Calu3 (cell line): ENCODE measurements at regions of chr17 and their contacts with region 1.

Region 1: DNA sequence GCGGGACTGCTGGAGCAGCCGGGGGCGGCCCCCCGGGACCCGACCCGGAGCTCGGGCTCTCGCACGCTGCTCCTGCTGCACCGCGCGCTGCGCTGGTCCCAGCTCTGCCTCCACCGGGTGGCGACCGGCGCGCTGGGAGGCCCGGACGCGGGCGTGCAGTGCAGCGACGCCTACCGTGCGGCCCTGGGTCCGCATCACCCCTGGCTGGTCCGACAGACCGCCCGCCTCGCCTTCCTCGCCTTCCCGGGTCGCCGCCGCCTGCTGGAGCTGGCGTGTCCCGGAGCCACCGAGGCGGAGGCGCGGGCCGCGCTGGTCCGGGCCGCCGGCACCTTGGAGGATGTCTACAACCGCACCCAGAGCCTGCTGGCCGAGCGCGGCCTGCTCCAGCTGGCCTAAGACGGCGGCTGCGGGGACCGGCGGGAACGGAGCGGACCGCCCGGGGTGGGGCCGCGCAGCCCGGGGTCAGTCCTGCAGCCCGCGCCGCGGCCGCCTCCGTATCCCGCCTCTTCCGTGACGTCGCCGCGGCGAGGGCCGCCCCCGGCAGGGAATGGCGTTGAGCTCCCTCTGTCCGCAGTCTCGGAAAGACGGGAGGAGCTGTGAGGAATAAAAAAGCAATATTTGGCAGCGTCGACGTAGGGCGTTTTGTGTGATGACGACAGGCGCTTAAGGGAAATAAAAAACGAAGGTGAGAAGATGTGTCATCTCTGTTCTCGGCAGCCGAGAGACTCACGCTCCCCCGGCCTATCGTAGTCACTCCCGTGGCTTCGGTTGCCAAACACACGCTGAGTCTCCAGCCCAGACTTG is 1.3 kb downstream of the GLTPD2 start:
- DNase-seq: peak; percentile 90
- H3K4me3 Mint-ChIP-seq: peak overlapping the region; percentile 87
- H3K27ac Mint-ChIP-seq: peak overlapping the region; percentile 75
- H3K4me1 Mint-ChIP-seq: peaks cover 16% of the 10 kb centered on the region
- H3K27me3 Mint-ChIP-seq: no peaks in the 10 kb centered on the region
- CTCF ChIP-seq: peak; percentile 69

Region 2: DNA sequence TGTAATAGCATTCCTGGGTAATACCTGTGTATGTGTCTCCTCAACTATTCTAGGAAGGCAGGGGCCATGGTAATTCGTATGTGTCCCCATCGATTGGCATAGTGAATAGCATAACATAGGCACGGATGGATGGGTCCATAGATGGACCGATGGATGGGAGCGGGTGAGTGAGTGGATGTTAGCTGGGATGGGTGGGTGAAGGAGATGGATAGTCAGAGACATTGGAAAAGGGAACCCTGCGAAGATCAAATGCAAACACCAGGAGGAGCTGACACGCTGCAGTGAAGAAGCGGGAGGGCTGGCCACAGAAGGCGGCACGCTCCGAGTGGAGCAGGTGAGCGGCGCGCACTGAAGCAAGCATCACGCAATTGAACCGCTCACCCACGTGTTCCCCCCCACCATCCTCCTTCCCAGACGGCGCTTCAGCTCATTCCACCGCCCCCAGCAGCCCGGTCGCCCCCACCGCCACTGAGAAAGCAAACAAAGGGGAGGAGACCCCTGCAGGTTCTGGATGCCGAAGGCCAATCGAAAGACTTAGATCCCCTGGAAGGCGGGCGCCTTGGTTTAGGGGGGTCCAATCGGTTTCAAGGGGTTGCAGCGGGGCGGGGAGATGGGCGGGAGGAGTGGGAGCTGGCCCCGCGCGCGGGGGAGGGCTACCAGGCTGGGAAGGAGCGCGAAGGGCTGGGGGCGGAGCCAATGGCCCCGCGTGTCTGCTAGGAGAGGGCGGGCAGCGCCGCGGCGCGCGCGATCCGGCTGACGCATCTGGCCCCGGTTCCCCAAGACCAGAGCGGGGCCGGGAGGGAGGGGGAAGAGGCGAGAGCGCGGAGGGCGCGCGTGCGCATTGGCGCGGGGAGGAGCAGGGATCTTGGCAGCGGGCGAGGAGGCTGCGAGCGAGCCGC is 80.1 kb before region 1 on chr17 and contains the start of gene ARRB2:
- CTCF ChIA-PET with region 1: interaction called, 14 read pairs
- intact Hi-C with region 1: loop called (anchors 5 kb)
- DNase-seq: peak; percentile 92
- H3K4me3 Mint-ChIP-seq: peak within 1 kb of the TSS; percentile 74
- H3K27ac Mint-ChIP-seq: peak within 1 kb of the TSS; percentile 62
- H3K4me1 Mint-ChIP-seq: peaks cover 11% of the 10 kb centered on the region
- H3K27me3 Mint-ChIP-seq: no peaks in the 10 kb centered on the region
- CTCF ChIP-seq: peak; percentile 46
- total RNA-seq, gene ARRB2: 21.1 and 27.6 TPM in 2 replicates

Region 3: GRCh38 chr17:4739122-4740024 is 50.7 kb before region 1 on chr17 and contains the starts of genes CXCL16 and ZMYND15:
- CTCF ChIA-PET with region 1: interaction called, 11 read pairs
- intact Hi-C with region 1: no loop called
- DNase-seq: peak; percentile 65
- H3K4me3 Mint-ChIP-seq: peak within 1 kb of the TSS; percentile 77
- H3K27ac Mint-ChIP-seq: peak within 1 kb of the TSS; percentile 82
- H3K4me1 Mint-ChIP-seq: peaks cover 8% of the 10 kb centered on the region
- H3K27me3 Mint-ChIP-seq: no peaks in the 10 kb centered on the region
- CTCF ChIP-seq: no peak
- total RNA-seq, gene CXCL16: 73.1 and 77.6 TPM in 2 replicates
- total RNA-seq, gene ZMYND15: 2.2 and 2.5 TPM in 2 replicates

Region 4: DNA sequence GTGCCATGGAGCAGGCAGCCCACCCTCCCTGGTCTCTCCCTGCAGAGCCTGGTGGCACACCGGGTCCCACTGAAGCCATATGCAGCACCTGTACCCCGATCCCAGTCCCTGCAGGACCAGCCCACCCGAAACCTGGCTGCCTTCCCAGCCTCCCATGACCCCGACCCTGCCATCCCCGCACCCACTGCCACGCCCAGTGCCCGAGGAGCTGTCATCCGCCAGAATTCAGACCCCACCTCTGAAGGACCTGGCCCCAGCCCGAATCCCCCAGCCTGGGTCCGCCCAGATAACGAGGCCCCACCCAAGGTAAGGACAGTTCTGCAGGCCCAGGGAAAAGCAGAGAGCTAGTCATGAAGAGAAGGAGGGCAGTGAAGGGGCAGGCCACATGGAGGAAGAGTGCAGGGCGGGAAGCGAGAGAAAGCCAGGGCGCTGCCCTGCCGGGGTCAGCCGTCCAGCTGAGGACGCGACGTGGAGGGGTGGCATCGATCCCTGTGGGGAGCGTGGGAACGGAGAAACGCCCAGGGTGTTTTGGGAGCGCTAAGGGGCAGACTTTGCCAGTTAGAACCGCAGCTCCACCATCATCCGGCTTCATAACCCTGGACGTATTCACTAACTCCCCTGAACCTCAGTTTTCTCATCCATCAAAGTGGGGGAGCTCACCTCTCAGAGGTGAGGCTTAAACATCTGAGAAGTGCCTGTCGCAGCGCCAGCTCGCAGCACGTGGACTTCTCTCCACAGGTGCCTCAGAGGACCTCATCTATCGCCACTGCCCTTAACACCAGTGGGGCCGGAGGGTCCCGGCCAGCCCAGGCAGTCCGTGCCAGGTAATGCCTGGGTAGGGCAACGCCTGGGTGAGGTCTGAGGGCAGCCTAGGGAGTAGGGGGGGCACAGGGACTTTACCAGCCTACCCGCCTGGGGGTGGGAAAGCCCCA is 101.6 kb after region 1 on chr17:
- CTCF ChIA-PET with region 1: interaction called, 4 read pairs
- intact Hi-C with region 1: loop called (anchors 1 kb)
- DNase-seq: no peak
- H3K4me3 Mint-ChIP-seq: no peak overlapping the region
- H3K27ac Mint-ChIP-seq: no peak overlapping the region
- H3K4me1 Mint-ChIP-seq: no peaks in the 10 kb centered on the region
- H3K27me3 Mint-ChIP-seq: no peaks in the 10 kb centered on the region
- CTCF ChIP-seq: no peak

Region 5: DNA sequence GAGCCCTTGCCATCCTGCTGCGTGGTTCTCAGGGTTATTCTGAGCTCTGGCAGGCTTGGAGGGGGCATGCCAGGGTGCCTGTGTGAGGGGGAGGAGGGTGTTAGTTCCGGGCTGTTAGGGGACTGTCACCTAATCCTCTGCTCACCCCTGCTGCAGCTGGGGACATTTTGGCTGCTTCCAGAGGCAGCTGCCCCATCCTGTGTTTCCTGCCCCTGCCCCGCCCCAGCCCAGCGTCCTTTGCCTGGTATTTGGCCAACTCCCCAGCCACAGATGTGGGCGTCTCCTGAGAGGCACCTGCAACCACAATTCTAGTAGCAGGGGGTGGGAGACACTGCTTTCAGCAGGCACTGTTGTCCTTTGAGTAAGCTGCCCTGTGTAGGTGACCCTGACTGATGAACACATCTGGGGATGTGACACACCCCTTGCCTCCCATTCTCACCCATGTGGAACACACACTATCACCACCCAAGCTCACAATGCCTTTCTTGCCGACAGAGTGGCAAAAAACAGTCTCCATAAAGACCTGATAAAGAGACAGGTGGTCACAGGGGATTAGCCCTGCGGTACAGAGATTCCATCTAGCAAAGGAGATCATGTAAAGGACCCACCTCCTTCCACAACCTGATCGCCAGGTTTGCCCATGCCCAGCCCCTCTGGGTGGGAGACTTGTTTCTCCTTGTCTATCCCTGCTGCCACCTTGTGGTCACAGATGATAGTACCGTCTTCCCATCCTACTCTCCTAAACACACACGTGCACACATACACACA is 113.1 kb after region 1 on chr17 and contains the start of gene CHRNE:
- CTCF ChIA-PET with region 1: interaction called, 3 read pairs
- intact Hi-C with region 1: loop called (anchors 5 kb)
- DNase-seq: peak; percentile 75
- H3K4me3 Mint-ChIP-seq: no peak within 1 kb of the TSS
- H3K27ac Mint-ChIP-seq: peak within 1 kb of the TSS; percentile 50
- H3K4me1 Mint-ChIP-seq: peaks cover 14% of the 10 kb centered on the region
- H3K27me3 Mint-ChIP-seq: no peaks in the 10 kb centered on the region
- CTCF ChIP-seq: peak; percentile 57
- total RNA-seq, gene CHRNE: 0.19 TPM in 1 of 2 replicates, not detected in the other